Mammary epithelial cell (primary cell): ENCODE measurements at regions of chr15 and their contacts with region 1.

Region 1: DNA sequence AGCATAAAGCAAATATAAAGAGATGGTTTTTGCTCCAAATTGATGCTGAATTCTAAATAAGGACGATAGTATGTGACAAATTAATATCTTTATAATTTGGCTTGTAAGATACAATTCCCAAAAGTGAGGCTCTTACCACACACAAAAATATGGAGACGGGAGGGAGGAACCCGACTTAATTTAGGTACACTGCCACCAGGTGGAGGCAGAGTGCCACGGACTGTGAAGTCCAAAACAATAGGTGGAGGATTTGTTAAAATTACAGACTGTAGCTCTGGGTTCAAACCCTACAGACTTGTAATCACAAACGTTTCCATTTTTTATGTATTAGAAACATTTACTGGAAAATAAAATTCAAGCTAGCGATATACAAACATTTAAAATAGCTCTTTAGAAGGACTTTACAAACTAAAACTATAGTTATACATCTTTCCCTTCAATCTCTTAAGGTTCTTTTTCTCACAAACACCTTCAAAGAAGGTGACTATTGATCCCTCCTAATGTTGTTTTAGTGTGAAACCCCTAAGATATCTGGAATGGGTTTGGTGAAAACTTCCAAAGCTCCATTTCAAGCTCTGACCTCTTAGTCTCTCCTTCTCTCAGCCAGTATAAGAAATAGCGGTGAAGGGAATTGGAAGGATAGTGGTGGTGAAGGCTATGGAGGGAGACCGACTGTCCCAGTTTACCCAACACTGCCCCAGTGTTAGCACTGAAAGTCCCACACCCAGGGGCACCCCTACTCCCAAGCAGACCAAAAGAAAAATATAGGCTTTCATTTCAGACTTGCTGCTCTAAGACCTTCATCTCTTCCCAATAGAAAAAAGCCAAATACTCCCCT is 89.7 kb downstream of the AQP9 start:
- DNase-seq: peak; percentile 57
- H3K4me3 ChIP-seq: no peak overlapping the region
- H3K27ac ChIP-seq: no peak overlapping the region
- H3K4me1 ChIP-seq: peaks cover 50% of the 10 kb centered on the region
- H3K27me3 ChIP-seq: no peaks in the 10 kb centered on the region
- CTCF ChIP-seq: peak; percentile 84 to 88

Region 2: GRCh38 chr15:58677426-58677825 is 449.5 kb after region 1 on chr15:
- CTCF ChIA-PET with region 1: interaction called, 3 read pairs
- dilution Hi-C with region 1: no loop called
- in situ Hi-C with region 1: no loop called
- intact Hi-C with region 1: loop called (anchors 10 kb)
- DNase-seq: no peak
- H3K4me3 ChIP-seq: no peak overlapping the region
- H3K27ac ChIP-seq: no peak overlapping the region
- H3K4me1 ChIP-seq: no peaks in the 10 kb centered on the region
- H3K27me3 ChIP-seq: no peaks in the 10 kb centered on the region
- CTCF ChIP-seq: peak in 1 of 2 donors; percentile 16

Region 3: GRCh38 chr15:58770857-58771620 is 543.1 kb after region 1 on chr15 and contains the start of gene MINDY2:
- CTCF ChIA-PET with region 1: interaction called, 4 read pairs
- dilution Hi-C with region 1: no loop called
- in situ Hi-C with region 1: loop called in 1 of 2 experiments (anchors 25 kb)
- intact Hi-C with region 1: loop called (anchors 5 kb)
- DNase-seq: peak; percentile 99
- H3K4me3 ChIP-seq: peak within 1 kb of the TSS; percentile 62 to 100 (median 73)
- H3K27ac ChIP-seq: peak within 1 kb of the TSS; percentile 83
- H3K4me1 ChIP-seq: peaks cover 14% of the 10 kb centered on the region
- H3K27me3 ChIP-seq: no peaks in the 10 kb centered on the region
- CTCF ChIP-seq: peak in 1 of 2 donors; percentile 47
- total RNA-seq, gene MINDY2: 17.5 to 30.7 TPM

Region 4: DNA sequence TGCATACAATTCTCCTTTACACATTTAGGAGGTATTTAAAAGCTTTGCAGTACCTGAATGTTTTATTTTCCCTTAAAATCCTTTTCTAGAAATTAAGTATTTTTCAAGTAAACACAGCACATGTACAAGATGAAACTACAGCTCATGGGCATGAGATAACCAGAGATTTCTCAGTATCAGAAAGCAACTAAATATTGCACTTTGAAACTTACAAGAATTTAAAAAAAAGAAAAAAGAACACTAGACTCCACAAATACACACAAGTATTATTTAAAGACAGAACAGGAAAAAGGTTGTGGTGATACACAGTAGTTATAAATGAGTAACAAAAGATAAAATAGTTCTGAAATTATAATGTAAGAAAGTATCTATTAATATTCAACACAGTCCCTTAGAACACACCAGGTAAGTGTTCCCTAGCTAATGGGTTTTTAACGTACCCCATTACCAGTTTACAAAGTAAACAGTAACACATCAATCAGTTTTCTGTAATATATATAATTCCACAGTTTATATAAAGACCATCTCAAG is 670.3 kb after region 1 on chr15:
- CTCF ChIA-PET with region 1: no interaction called
- dilution Hi-C with region 1: no loop called
- in situ Hi-C with region 1: no loop called
- intact Hi-C with region 1: loop called (anchors 10 kb)
- DNase-seq: no peak
- H3K4me3 ChIP-seq: no peak overlapping the region
- H3K27ac ChIP-seq: no peak overlapping the region
- H3K4me1 ChIP-seq: no peaks in the 10 kb centered on the region
- H3K27me3 ChIP-seq: no peaks in the 10 kb centered on the region
- CTCF ChIP-seq: no peak

Region 5: GRCh38 chr15:59104912-59105732 is 877.2 kb after region 1 on chr15 and contains the start of gene CCNB2:
- CTCF ChIA-PET with region 1: no interaction called
- dilution Hi-C with region 1: no loop called
- in situ Hi-C with region 1: no loop called
- intact Hi-C with region 1: loop called (anchors 10 kb)
- DNase-seq: peak; percentile 92
- H3K4me3 ChIP-seq: peak within 1 kb of the TSS; percentile 81 to 90 (median 85)
- H3K27ac ChIP-seq: peak within 1 kb of the TSS; percentile 76
- H3K4me1 ChIP-seq: peaks cover 5% of the 10 kb centered on the region
- H3K27me3 ChIP-seq: no peaks in the 10 kb centered on the region
- CTCF ChIP-seq: no peak
- total RNA-seq, gene CCNB2: 2.8 to 37.4 TPM